RWPE1 (cell line): ENCODE measurements at regions of chr2 and their contacts with region 1.

Region 1: DNA sequence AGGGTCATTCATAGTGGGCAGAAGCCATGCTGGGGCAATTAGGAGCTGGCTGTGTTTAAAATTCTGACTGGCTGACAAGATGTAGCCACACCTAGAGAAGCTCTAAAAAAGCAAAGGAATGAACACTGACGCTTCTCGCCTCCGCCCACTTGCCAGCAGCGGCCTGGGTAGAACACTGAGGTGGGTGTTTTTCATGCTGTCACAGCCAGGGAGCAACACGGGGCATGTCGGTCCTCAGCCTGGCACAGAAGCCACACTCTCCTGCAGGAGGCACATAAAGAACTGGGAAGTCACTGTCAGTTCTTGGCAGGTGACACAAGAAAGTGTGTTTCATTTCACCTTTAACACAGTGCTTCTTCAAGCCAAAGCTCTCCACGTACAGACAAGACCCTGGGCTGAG is 10.4 kb downstream of the CHST10 start:
- DNase-seq: no peak
- H3K27ac ChIP-seq: no peak overlapping the region
- CTCF ChIP-seq: no peak

Region 2: DNA sequence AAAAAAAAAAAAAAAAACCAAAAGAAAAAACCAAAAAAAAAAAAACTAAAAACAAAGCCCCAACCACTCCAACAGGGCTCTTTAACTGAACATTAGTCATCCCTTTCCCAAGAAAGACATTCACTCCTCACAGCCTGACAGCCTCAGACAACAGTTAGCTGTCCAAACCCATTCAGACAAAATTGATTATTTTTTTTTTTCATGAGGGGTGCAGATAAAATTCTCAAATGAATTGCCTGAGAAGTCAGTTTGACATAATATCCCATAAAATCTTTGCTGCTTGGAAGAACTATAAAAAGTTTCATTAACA is 711.2 kb before region 1 on chr2:
- CTCF ChIA-PET with region 1: interaction called, 11 read pairs
- POLR2A ChIA-PET with region 1: no interaction called
- DNase-seq: no peak
- H3K27ac ChIP-seq: no peak overlapping the region
- CTCF ChIP-seq: no peak